ENCODE measurements at regions of chr1 and their contacts with region 1.

Region 1: DNA sequence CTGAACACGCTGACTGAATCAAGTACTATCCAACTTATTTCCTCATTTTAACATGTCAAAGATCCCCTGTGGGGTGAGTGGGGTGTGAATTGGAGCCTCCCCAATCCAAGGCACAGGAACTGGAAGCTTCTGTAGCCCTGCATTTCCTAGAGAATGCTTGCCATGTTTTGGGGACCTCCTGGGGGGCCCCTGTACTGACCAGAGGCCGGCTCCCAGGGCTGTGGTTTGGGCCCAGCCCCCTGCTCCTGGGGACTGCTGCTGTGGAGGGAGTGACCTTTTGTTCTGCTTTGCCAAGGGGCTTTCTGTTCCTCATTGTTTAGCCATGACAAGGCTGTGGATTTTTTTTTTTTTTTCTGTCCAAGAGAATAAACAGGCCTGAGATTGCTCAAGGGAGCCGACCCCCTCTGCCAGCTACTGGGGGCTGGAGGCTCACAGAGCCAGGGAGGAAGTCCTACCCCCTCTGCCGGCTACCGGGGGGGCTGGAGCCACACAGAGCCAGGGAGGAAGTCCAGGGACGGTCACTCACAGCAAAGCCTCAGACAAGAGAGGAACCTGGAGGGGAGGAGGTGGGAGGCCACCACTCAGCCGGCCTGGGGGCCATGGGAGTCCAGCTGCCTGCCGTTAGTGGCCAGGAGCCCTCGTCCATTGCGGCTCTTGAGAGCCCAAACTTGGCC is 17.4 kb downstream of the TNFRSF1B start:
- H3K4me3 Mint-ChIP-seq: peak overlapping the region; percentile 70
- H3K27ac Mint-ChIP-seq: peak overlapping the region; percentile 96
- H3K4me1 Mint-ChIP-seq: peaks cover 95% of the 10 kb centered on the region
- H3K27me3 Mint-ChIP-seq: no peaks in the 10 kb centered on the region

Region 2: DNA sequence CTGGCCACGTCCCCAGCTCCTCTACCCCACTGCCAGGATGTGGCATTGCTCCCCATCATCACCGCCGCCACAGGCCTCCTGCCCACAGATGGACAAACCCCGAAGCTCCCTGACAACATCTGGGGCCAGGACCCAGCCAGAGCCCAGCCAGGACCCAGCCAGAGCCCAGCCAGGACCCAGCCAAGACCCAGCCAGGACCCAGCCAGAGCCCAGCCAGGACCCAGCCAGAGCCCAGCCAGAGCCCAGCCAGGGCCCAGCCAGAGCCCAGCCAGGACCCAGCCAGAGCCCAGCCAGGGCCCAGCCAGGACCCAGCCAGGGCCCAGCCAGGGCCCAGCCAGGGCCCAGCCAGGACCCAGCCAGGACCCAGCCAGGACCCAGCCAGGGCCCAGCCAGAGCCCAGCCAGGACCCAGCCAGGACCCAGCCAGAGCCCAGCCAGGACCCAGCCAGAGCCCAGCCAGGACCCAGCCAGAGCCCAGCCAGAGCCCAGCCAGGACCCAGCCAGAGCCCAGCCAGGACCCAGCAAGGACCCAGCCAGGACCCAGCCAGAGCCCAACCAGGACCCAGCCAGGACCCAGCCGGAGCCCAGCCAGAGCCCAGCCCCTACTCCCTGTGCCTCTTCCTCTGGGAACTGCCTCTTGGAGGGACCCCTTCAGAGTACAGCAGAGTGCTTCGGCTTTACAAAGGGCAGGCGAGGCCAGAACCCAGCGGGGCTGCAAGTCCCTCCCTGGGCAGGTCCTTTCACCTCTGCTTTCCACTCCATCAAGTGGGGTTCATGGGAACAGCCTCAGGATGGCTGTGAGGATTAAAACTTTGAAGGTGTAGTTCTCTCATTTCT is 661.5 kb before region 1 on chr1:
- intact Hi-C with region 1: no loop called
- H3K4me3 Mint-ChIP-seq: no peak overlapping the region
- H3K27ac Mint-ChIP-seq: no peak overlapping the region
- H3K4me1 Mint-ChIP-seq: no peaks in the 10 kb centered on the region
- H3K27me3 Mint-ChIP-seq: no peaks in the 10 kb centered on the region

Region 3: DNA sequence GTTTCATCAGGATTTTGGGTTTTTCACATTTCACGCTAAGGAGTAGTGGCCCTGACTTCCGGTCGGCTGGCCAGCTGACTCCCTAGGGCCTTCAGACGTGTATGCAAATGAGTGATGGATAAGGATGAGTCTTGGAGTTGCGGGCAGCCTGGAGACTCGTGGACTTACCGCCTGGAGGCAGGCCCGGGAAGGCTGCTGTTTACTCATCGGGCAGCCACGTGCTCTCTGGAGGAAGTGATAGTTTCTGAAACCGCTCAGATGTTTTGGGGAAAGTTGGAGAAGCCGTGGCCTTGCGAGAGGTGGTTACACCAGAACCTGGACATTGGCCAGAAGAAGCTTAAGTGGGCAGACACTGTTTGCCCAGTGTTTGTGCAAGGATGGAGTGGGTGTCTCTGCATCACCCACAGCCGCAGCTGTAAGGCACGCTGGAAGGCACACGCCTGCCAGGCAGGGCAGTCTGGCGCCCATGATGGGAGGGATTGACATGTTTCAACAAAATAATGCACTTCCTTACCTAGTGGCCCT is 40.5 kb before region 1 on chr1:
- intact Hi-C with region 1: loop called (anchors 5 kb)
- H3K4me3 Mint-ChIP-seq: peak overlapping the region; percentile 0
- H3K27ac Mint-ChIP-seq: peak overlapping the region; percentile 93
- H3K4me1 Mint-ChIP-seq: peaks cover 100% of the 10 kb centered on the region
- H3K27me3 Mint-ChIP-seq: no peaks in the 10 kb centered on the region

Measured in dendritic cell treated with granulocyte-macrophage colony-stimulating factor and Interleukin-4, amounts not matched to agents 40 ng/mL and 50 ng/mL, for 4 days (primary cell).